ENCODE measurements at regions of chr12 and their contacts with region 1.

Region 1: GRCh38 chr12:93979189-93979588 is 169.2 kb upstream of the PLXNC1 start:
- DNase-seq: no peak
- ATAC-seq: peak in 2 of 4 donors; percentile 36
- H3K4me3 ChIP-seq: no peak overlapping the region
- H3K27ac ChIP-seq: peak overlapping the region in 1 of 12 donors; percentile 7
- H3K4me1 ChIP-seq: peaks cover 0 to 16% (median 5%) of the 10 kb centered on the region in 12 donors
- H3K27me3 ChIP-seq: no peaks in the 10 kb centered on the region
- CTCF ChIP-seq: peak; percentile 26 to 73 (median 58)
- POLR2A ChIP-seq: no peak

Region 2: DNA sequence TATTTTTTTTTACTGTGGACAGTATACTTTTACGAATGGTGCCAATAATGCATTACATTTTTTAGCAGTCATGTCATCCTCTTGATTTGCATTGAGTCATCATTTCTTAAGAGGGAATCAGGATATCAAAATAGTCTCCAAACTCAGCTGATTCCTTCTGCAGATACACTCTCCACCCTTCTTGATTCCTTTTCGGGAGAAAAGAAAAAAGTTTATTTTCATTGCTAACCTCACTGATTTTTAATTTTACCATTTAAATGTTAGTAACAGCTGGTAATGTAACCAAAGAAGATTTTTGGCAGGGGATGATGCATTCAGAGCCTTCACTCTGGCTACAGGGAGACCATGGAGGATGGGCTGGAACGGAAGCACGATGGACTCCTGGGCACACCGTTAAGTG is 464.3 kb before region 1 on chr12:
- intact Hi-C with region 1: loop called in 1 of 10 experiments (anchors 10 kb)
- DNase-seq: no peak
- ATAC-seq: no peak
- H3K4me3 ChIP-seq: no peak overlapping the region
- H3K27ac ChIP-seq: no peak overlapping the region
- H3K4me1 ChIP-seq: peaks cover 0 to 7% (median 0%) of the 10 kb centered on the region in 12 donors
- H3K27me3 ChIP-seq: no peaks in the 10 kb centered on the region
- CTCF ChIP-seq: no peak
- POLR2A ChIP-seq: no peak

Region 3: GRCh38 chr12:93677195-93678064 is 301.8 kb before region 1 on chr12 and contains the start of gene CRADD:
- intact Hi-C with region 1: loop called in 4 of 10 experiments (anchors 5 to 10 kb)
- DNase-seq: peak; percentile 79 to 90 (median 83)
- ATAC-seq: peak; percentile 86 to 94 (median 92)
- H3K4me3 ChIP-seq: peak within 1 kb of the TSS; percentile 36 to 84 (median 70)
- H3K27ac ChIP-seq: peak within 1 kb of the TSS; percentile 84 to 100 (median 97)
- H3K4me1 ChIP-seq: peaks cover 0 to 52% (median 24%) of the 10 kb centered on the region in 12 donors
- H3K27me3 ChIP-seq: no peaks in the 10 kb centered on the region
- CTCF ChIP-seq: no peak
- POLR2A ChIP-seq: peak in 1 of 2 donors; percentile 73
- total RNA-seq, gene CRADD: 40.1 to 100 (median 56.1) TPM

Region 4: GRCh38 chr12:93742110-93742934 is 236.9 kb before region 1 on chr12:
- intact Hi-C with region 1: loop called in 1 of 10 experiments (anchors 10 kb)
- DNase-seq: peak; percentile 73 to 85 (median 80)
- ATAC-seq: peak; percentile 78 to 97 (median 92)
- H3K4me3 ChIP-seq: peak overlapping the region; percentile 33 to 70 (median 64)
- H3K27ac ChIP-seq: peak overlapping the region; percentile 88 to 95 (median 93)
- H3K4me1 ChIP-seq: peaks cover 0 to 85% (median 60%) of the 10 kb centered on the region in 12 donors
- H3K27me3 ChIP-seq: no peaks in the 10 kb centered on the region
- CTCF ChIP-seq: peak in 9 of 12 donors; percentile 17 to 54 (median 36)
- POLR2A ChIP-seq: peak in 1 of 2 donors; percentile 13

Region 5: DNA sequence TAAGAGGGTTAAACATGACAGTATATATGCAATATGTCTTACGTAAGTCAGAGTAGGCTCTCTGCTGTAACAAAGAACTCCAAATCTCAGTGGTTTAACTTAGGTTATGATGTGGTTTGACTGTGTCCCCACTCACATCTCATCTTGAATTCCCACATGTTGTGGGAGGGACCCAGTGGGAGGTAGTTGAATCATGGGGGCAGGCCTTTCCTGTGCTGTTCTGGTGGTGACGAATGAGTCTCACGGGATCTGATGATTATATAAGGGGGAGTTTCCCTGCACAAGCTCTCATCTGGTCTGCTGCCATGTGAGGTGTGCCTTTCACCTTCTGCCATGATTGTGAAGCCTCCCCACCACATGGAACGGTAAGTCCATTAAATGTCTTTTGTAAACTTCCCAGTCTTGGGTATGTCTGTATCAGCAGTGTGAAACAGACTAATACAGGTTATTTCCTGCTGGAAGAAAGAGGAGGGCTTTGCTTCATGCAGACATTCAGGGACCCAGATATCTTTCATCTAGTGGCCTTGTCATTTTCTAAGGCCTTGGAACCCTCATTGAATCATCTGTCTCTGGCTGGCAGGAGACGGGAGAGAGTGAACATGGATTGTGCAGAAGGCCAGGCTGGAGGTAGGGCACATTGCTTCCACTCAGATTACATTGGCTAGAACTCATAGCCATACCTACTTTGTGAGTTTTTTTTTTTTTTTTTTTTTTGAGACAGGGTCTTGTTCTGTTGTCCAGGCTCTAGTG is 205.9 kb before region 1 on chr12:
- intact Hi-C with region 1: loop called in 5 of 10 experiments (anchors 5 kb)
- DNase-seq: peak in 1 of 5 donors; percentile 33
- ATAC-seq: peak in 2 of 4 donors; percentile 21 to 27
- H3K4me3 ChIP-seq: no peak overlapping the region
- H3K27ac ChIP-seq: peak overlapping the region in 3 of 12 donors; percentile 1 to 18 (median 5)
- H3K4me1 ChIP-seq: peaks cover 9 to 42% (median 29%) of the 10 kb centered on the region in 12 donors
- H3K27me3 ChIP-seq: no peaks in the 10 kb centered on the region
- CTCF ChIP-seq: no peak
- POLR2A ChIP-seq: no peak

Region 6: DNA sequence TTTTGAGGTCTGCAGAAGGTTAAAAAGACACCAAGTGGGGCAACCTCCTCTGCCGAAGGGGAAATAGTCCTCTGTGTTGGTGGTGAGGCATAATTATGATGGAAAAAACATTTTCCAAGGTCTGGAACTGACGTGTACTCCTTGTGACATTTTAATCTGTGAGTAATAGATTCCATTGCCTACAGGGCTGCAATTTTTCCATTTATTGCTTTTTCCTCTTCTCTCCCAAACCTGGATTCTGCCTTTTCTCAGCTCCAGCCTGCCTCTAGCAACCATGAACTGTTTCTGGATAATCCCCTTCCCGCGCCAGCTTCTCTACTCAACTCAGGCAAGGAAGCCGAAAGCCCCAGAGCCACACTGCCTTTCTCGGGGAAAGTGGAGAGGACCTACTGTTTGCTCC is 60.9 kb before region 1 on chr12:
- intact Hi-C with region 1: loop called in 1 of 10 experiments (anchors 10 kb)
- DNase-seq: no peak
- ATAC-seq: peak in 3 of 4 donors; percentile 19 to 58 (median 54)
- H3K4me3 ChIP-seq: no peak overlapping the region
- H3K27ac ChIP-seq: peak overlapping the region in 5 of 12 donors; percentile 25 to 54 (median 45)
- H3K4me1 ChIP-seq: peaks cover 0 to 14% (median 0%) of the 10 kb centered on the region in 12 donors
- H3K27me3 ChIP-seq: no peaks in the 10 kb centered on the region
- CTCF ChIP-seq: no peak
- POLR2A ChIP-seq: no peak

Region 7: GRCh38 chr12:94195443-94195842 is 216.3 kb after region 1 on chr12:
- intact Hi-C with region 1: no loop called
- DNase-seq: no peak
- ATAC-seq: no peak
- H3K4me3 ChIP-seq: no peak overlapping the region
- H3K27ac ChIP-seq: no peak overlapping the region
- H3K4me1 ChIP-seq: no peaks in the 10 kb centered on the region
- H3K27me3 ChIP-seq: no peaks in the 10 kb centered on the region
- CTCF ChIP-seq: no peak
- POLR2A ChIP-seq: no peak

Measured in heart left ventricle (tissue), 16 donors.